IMR-90 (cell line): ENCODE measurements at regions of chr15 and their contacts with region 1.

Region 1: GRCh38 chr15:62389885-62390790 is 225.1 kb upstream of the C2CD4B start:
- DNase-seq: peak; percentile 77
- ATAC-seq: peak; percentile 79
- H3K4me3 ChIP-seq: peak within 1 kb of the TSS; percentile 91
- H3K27ac ChIP-seq: peak within 1 kb of the TSS; percentile 81
- H3K4me1 ChIP-seq: peaks cover 6% of the 10 kb centered on the region
- H3K27me3 ChIP-seq: no peaks in the 10 kb centered on the region
- CTCF ChIP-seq: 0 out of 2 replicates have a peak, but pooled peaks have one; percentile 2
- POLR2A ChIP-seq: peak; percentile 92
- RAD21 ChIP-seq: peak; percentile 39

Region 2: DNA sequence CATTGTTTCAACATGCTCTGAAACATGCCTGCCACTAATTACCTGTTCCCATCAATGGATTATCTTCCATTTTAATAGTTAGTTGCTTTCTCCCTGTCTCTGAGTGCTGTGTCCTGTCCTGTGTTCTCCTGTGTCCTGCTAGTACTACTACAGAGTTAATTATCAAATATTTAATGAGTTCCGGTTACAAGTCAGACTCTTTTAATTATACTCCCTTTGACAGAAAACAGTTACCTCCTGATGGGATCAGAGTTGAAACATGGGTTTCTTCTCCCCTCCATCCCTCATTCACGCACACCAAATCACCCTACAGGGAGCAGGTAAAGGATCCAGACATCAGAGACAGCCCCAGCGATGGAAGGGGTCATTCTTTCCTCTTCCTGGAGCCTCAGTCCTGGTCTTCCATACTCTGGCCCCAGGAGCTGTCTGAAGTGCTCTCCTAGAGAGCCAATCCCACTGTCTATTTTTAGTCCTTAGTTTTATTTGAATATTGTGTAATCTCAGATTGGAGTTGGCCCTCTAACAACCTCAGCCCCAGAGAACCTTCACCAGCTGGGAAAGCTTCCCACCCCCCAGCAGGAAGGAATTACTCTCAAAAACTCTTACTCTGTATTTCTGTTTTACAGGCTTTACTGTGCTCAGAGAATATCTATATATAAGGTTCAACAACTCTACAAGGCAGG is 88.0 kb before region 1 on chr15:
- CTCF ChIA-PET with region 1: no interaction called
- POLR2A ChIA-PET with region 1: no interaction called
- dilution Hi-C with region 1: no loop called
- in situ Hi-C with region 1: no loop called
- intact Hi-C with region 1: no loop called
- DNase-seq: peak; percentile 1
- ATAC-seq: 0 out of 2 replicates have a peak, but pooled peaks have one; percentile 24
- H3K4me3 ChIP-seq: no peak overlapping the region
- H3K27ac ChIP-seq: no peak overlapping the region
- H3K4me1 ChIP-seq: no peaks in the 10 kb centered on the region
- H3K27me3 ChIP-seq: peaks cover 32% of the 10 kb centered on the region
- CTCF ChIP-seq: no peak
- POLR2A ChIP-seq: no peak
- RAD21 ChIP-seq: no peak

Region 3: GRCh38 chr15:62453981-62454380 is 63.8 kb after region 1 on chr15:
- CTCF ChIA-PET with region 1: interaction called, 3 read pairs
- POLR2A ChIA-PET with region 1: interaction called, 7 read pairs
- dilution Hi-C with region 1: no loop called
- in situ Hi-C with region 1: no loop called
- intact Hi-C with region 1: loop called (anchors 5 kb)
- DNase-seq: peak; percentile 80
- ATAC-seq: peak; percentile 75
- H3K4me3 ChIP-seq: no peak overlapping the region
- H3K27ac ChIP-seq: peak overlapping the region; percentile 97
- H3K4me1 ChIP-seq: peaks cover 40% of the 10 kb centered on the region
- H3K27me3 ChIP-seq: no peaks in the 10 kb centered on the region
- CTCF ChIP-seq: no peak
- POLR2A ChIP-seq: no peak
- RAD21 ChIP-seq: 0 out of 2 replicates have a peak, but pooled peaks have one; percentile 2

Region 4: GRCh38 chr15:62495670-62496614 is 105.8 kb after region 1 on chr15:
- CTCF ChIA-PET with region 1: no interaction called
- POLR2A ChIA-PET with region 1: no interaction called
- dilution Hi-C with region 1: no loop called
- in situ Hi-C with region 1: no loop called
- intact Hi-C with region 1: loop called (anchors 5 kb)
- DNase-seq: peak; percentile 94
- ATAC-seq: peak; percentile 73
- H3K4me3 ChIP-seq: no peak overlapping the region
- H3K27ac ChIP-seq: peak overlapping the region; percentile 61; the same call in 1 of the 2 replicates
- H3K4me1 ChIP-seq: peaks cover 13% of the 10 kb centered on the region
- H3K27me3 ChIP-seq: no peaks in the 10 kb centered on the region
- CTCF ChIP-seq: no peak
- POLR2A ChIP-seq: no peak
- RAD21 ChIP-seq: no peak

Region 5: DNA sequence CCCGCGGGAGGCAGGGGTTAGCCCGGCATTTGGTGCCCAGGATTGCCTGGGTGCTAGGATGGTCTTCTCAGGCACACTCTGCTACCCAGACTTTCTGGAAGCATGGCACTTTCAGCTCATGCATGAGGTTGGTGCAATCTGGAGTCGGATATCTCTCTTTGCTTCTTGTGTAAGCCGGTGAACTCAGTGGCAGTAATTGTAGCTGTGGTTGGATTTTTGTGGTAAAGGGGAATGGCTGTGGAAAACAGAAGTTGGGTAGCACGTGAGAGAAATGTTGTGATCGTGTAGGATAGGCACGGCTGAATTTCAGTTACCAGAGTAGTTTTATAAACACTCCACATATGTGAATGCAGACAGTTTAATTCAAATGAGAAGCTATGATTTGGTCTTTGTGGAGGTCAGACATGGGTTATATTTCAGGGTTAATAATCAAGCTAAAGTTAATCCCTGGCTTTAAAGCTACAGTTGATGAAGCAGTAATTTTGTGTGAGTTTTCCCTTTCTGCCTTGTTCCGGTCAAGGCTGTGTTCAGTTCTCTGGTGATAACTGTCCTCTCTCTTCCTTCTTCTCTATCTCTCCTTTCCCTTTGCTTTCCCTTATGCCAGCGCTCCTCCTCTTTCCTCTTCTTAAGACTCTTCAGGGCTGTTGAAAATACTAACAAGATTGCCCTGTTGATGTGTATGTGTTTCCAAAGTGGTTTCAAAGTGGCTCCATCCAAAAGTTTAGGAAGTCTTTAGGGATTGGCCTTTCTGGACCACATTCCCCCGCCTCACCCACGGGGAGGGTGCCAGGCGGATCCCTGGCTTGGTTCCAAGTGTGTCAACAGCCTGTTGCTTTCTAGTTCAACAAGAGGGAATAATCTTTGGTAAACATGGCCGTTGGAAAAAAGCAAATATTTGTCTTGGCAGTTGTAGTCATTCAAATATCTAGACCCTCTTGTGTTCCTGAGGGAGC is 179.6 kb after region 1 on chr15:
- CTCF ChIA-PET with region 1: interaction called, 4 read pairs
- POLR2A ChIA-PET with region 1: no interaction called
- dilution Hi-C with region 1: no loop called
- in situ Hi-C with region 1: no loop called
- intact Hi-C with region 1: loop called (anchors 5 kb)
- DNase-seq: peak; percentile 96
- ATAC-seq: peak; percentile 95
- H3K4me3 ChIP-seq: no peak overlapping the region
- H3K27ac ChIP-seq: peak overlapping the region; percentile 24; the same call in 1 of the 2 replicates
- H3K4me1 ChIP-seq: peaks cover 14% of the 10 kb centered on the region
- H3K27me3 ChIP-seq: peaks cover 23% of the 10 kb centered on the region
- CTCF ChIP-seq: no peak
- POLR2A ChIP-seq: no peak
- RAD21 ChIP-seq: peak; percentile 11; the same call in 1 of the 2 replicates

Region 6: GRCh38 chr15:62584301-62585235 is 194.4 kb after region 1 on chr15:
- CTCF ChIA-PET with region 1: no interaction called
- POLR2A ChIA-PET with region 1: no interaction called
- dilution Hi-C with region 1: no loop called
- in situ Hi-C with region 1: no loop called
- intact Hi-C with region 1: no loop called
- DNase-seq: no peak
- ATAC-seq: no peak
- H3K4me3 ChIP-seq: no peak overlapping the region
- H3K27ac ChIP-seq: no peak overlapping the region
- H3K4me1 ChIP-seq: peaks cover 3% of the 10 kb centered on the region
- H3K27me3 ChIP-seq: no peaks in the 10 kb centered on the region
- CTCF ChIP-seq: no peak
- POLR2A ChIP-seq: no peak
- RAD21 ChIP-seq: no peak

Region 7: GRCh38 chr15:62649793-62650420 is 259.8 kb after region 1 on chr15:
- CTCF ChIA-PET with region 1: no interaction called
- POLR2A ChIA-PET with region 1: no interaction called
- dilution Hi-C with region 1: no loop called
- in situ Hi-C with region 1: no loop called
- intact Hi-C with region 1: loop called (anchors 5 kb)
- DNase-seq: peak; percentile 58
- ATAC-seq: no peak; the same call in 1 of the 2 replicates
- H3K4me3 ChIP-seq: no peak overlapping the region
- H3K27ac ChIP-seq: no peak overlapping the region
- H3K4me1 ChIP-seq: peaks cover 3% of the 10 kb centered on the region; the same call in 1 of the 2 replicates
- H3K27me3 ChIP-seq: no peaks in the 10 kb centered on the region
- CTCF ChIP-seq: no peak
- POLR2A ChIP-seq: no peak
- RAD21 ChIP-seq: no peak

Region 8: GRCh38 chr15:63048115-63048775 is 658.1 kb after region 1 on chr15:
- CTCF ChIA-PET with region 1: no interaction called
- POLR2A ChIA-PET with region 1: interaction called, 3 read pairs
- dilution Hi-C with region 1: no loop called
- in situ Hi-C with region 1: no loop called
- intact Hi-C with region 1: loop called (anchors 5 kb)
- DNase-seq: peak; percentile 92
- ATAC-seq: peak; percentile 60
- H3K4me3 ChIP-seq: peak overlapping the region; percentile 84
- H3K27ac ChIP-seq: peak overlapping the region; percentile 92
- H3K4me1 ChIP-seq: peaks cover 22% of the 10 kb centered on the region
- H3K27me3 ChIP-seq: no peaks in the 10 kb centered on the region
- CTCF ChIP-seq: peak; percentile 82
- POLR2A ChIP-seq: peak; percentile 79
- RAD21 ChIP-seq: peak; percentile 80